Lower leg skin (tissue), 4 donors: ENCODE measurements at regions of chr7 and their contacts with region 1.

Region 1: GRCh38 chr7:34837801-34838201 is 179.8 kb downstream of the NPSR1 start:
- DNase-seq: no peak
- H3K4me3 ChIP-seq: no peak overlapping the region
- CTCF ChIP-seq: no peak
- POLR2A ChIP-seq: no peak

Region 2: GRCh38 chr7:33591490-33592065 is 1246.2 kb before region 1 on chr7:
- intact Hi-C with region 1: loop called (anchors 5 kb)
- DNase-seq: no peak
- H3K4me3 ChIP-seq: no peak overlapping the region
- CTCF ChIP-seq: no peak
- POLR2A ChIP-seq: no peak